ENCODE measurements at regions of chr2 and their contacts with region 1.

Region 1: GRCh38 chr2:241558532-241559322 is at the start of gene BOK:
- DNase-seq: peak; percentile 84
- H3K4me3 ChIP-seq: peak within 1 kb of the TSS; percentile 71 to 80 (median 72)
- H3K27ac ChIP-seq: peak within 1 kb of the TSS; percentile 25
- H3K4me1 ChIP-seq: peaks cover 30% of the 10 kb centered on the region
- H3K27me3 ChIP-seq: no peaks in the 10 kb centered on the region
- CTCF ChIP-seq: no peak
- POLR2A ChIP-seq: peak; percentile 68
- total RNA-seq, gene BOK: 52.4 and 76.0 TPM in 2 replicates

Region 2: GRCh38 chr2:241279413-241279812 is 279.3 kb before region 1 on chr2:
- CTCF ChIA-PET with region 1: no interaction called
- POLR2A ChIA-PET with region 1: no interaction called
- dilution Hi-C with region 1: no loop called
- intact Hi-C with region 1: no loop called
- DNase-seq: no peak
- H3K4me3 ChIP-seq: no peak overlapping the region
- H3K27ac ChIP-seq: no peak overlapping the region
- H3K4me1 ChIP-seq: no peaks in the 10 kb centered on the region
- H3K27me3 ChIP-seq: no peaks in the 10 kb centered on the region
- CTCF ChIP-seq: no peak
- POLR2A ChIP-seq: no peak

Region 3: GRCh38 chr2:241546771-241547498 is 11.8 kb before region 1 on chr2:
- CTCF ChIA-PET with region 1: interaction called, 7 read pairs
- POLR2A ChIA-PET with region 1: interaction called, 8 read pairs
- dilution Hi-C with region 1: no loop called
- intact Hi-C with region 1: loop called (anchors 1 kb)
- DNase-seq: peak; percentile 92
- H3K4me3 ChIP-seq: no peak overlapping the region
- H3K27ac ChIP-seq: peak overlapping the region; percentile 61
- H3K4me1 ChIP-seq: peaks cover 33% of the 10 kb centered on the region
- H3K27me3 ChIP-seq: no peaks in the 10 kb centered on the region
- CTCF ChIP-seq: no peak
- POLR2A ChIP-seq: peak; percentile 50

Region 4: GRCh38 chr2:241576293-241576654 is 17.5 kb after region 1 on chr2:
- CTCF ChIA-PET with region 1: no interaction called
- POLR2A ChIA-PET with region 1: no interaction called
- dilution Hi-C with region 1: no loop called
- intact Hi-C with region 1: no loop called
- DNase-seq: no peak
- H3K4me3 ChIP-seq: no peak overlapping the region
- H3K27ac ChIP-seq: no peak overlapping the region
- H3K4me1 ChIP-seq: no peaks in the 10 kb centered on the region
- H3K27me3 ChIP-seq: no peaks in the 10 kb centered on the region
- CTCF ChIP-seq: no peak
- POLR2A ChIP-seq: no peak

Region 5: DNA sequence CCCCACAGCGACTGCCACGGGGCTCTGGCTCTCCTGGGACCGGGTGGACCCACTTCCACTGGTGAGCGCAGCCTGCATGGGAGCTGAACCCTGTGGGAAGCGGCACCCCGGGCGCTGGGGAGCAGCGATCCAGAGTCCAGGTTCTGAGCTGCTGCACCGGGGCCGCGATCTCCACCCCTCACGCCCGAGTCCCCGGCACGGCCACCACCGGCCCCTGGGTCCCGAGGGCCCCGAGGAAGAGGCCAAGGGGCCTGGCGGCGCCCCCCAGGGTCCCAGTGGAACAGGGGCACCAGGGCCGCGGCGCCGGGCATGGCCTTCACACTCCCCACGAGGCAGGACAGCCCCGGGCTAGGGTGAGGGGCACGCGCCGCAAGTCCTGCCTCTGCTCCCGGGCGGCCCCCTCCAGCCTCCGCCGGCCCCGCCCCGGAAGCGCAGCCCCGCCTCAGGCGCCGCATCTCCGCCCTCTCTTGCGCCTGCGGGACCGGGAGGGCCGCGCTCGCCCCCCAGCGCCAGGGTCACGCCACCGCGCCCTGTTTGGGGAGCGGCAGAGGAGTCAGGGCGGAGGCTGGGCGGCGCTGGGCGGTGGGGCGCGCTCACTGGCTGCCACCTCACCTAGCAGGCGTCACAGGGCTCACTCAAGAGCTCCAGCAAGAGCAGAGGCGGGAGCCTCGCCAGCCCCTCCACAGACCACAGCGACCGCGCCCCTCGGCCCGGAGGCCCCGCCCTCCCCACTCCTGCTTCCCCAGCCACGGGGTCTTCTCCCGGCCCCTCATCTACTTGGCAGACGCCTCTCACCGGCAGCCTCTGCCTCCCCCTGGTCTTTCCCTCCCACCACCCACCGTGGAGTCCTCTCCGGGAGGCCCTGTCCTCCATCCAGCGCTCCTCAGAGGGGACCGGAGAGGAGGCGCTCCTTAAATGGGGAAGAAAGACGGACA is 51.4 kb after region 1 on chr2:
- CTCF ChIA-PET with region 1: interaction called, 3 read pairs
- POLR2A ChIA-PET with region 1: no interaction called
- dilution Hi-C with region 1: no loop called
- intact Hi-C with region 1: loop called (anchors 2 kb)
- DNase-seq: peak; percentile 83
- H3K4me3 ChIP-seq: peak overlapping the region; percentile 15 to 53 (median 15)
- H3K27ac ChIP-seq: peak overlapping the region; percentile 28
- H3K4me1 ChIP-seq: peaks cover 5% of the 10 kb centered on the region
- H3K27me3 ChIP-seq: no peaks in the 10 kb centered on the region
- CTCF ChIP-seq: peak; percentile 62 to 67
- POLR2A ChIP-seq: peak; percentile 35